A673 (cell line): ENCODE measurements at regions of chr1 and their contacts with region 1.

Region 1: GRCh38 chr1:165367375-165367993 is 11.0 kb upstream of the LMX1A start:
- DNase-seq: peak; percentile 76
- H3K4me3 ChIP-seq: no peak overlapping the region
- H3K27ac ChIP-seq: no peak overlapping the region
- H3K4me1 ChIP-seq: no peaks in the 10 kb centered on the region
- H3K27me3 ChIP-seq: no peaks in the 10 kb centered on the region
- CTCF ChIP-seq: peak; percentile 96

Region 2: DNA sequence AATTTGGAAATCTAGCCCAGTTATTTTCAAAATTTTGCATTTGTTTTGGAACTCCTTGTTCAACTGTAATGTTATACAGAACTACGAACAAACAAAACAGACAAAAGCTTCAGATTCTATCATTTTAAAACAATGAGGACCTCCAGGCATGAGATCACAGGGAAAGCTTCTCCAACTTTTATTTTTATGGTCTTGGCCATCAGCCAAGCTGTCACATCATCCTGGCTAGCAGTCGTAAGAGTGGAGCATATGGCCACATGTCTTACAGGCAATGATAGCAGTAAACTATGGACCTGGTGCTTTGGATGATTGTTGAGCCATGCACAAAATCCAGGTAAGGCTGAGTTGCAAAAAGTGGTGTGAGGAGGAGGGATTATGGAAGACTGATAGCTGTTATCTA is 310.6 kb before region 1 on chr1:
- CTCF ChIA-PET with region 1: no interaction called
- POLR2A ChIA-PET with region 1: no interaction called
- intact Hi-C with region 1: no loop called
- DNase-seq: peak; percentile 32
- H3K4me3 ChIP-seq: no peak overlapping the region
- H3K27ac ChIP-seq: no peak overlapping the region
- H3K4me1 ChIP-seq: no peaks in the 10 kb centered on the region
- H3K27me3 ChIP-seq: no peaks in the 10 kb centered on the region
- CTCF ChIP-seq: no peak

Region 3: GRCh38 chr1:165129568-165130164 is 237.8 kb before region 1 on chr1:
- CTCF ChIA-PET with region 1: interaction called, 7 read pairs
- POLR2A ChIA-PET with region 1: no interaction called
- intact Hi-C with region 1: loop called (anchors 5 kb)
- DNase-seq: peak; percentile 81
- H3K4me3 ChIP-seq: no peak overlapping the region
- H3K27ac ChIP-seq: no peak overlapping the region
- H3K4me1 ChIP-seq: no peaks in the 10 kb centered on the region
- H3K27me3 ChIP-seq: peaks cover 59% of the 10 kb centered on the region
- CTCF ChIP-seq: peak; percentile 91

Region 4: DNA sequence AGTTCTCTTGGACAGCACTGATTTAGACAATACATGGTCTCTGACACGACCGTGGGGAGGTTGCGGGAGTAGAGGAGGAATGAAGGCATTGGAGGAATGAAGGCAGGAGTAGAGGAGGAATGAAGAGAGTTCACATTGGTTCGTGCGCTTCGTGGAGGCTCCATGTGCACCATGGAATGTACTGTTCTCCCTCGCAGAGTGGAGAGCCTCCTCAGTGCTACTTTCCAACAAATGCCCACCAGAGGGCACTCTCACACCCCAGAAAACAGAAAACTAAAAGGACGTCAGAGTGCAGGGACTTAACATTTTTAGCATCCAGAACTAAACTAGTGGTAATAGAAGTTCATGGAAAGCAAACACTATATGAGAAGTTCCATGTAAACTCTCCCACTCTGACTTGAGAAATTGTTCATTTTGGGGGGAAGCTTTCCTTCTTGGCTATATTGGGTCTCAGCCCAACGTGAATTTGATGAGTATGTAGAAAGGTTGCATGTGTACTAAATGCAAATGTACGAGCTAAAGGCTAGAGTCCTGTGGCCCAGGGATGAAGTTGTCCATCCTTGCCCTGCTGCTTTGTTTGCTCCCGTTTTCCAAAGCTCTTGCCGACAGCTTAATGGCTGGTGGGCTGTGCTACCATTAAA is 222.6 kb before region 1 on chr1:
- CTCF ChIA-PET with region 1: no interaction called
- POLR2A ChIA-PET with region 1: no interaction called
- intact Hi-C with region 1: loop called (anchors 1 kb)
- DNase-seq: peak; percentile 82
- H3K4me3 ChIP-seq: no peak overlapping the region
- H3K27ac ChIP-seq: no peak overlapping the region
- H3K4me1 ChIP-seq: no peaks in the 10 kb centered on the region
- H3K27me3 ChIP-seq: peaks cover 26% of the 10 kb centered on the region
- CTCF ChIP-seq: peak; percentile 90

Region 5: GRCh38 chr1:165257969-165258459 is 109.5 kb before region 1 on chr1:
- CTCF ChIA-PET with region 1: interaction called, 23 read pairs
- POLR2A ChIA-PET with region 1: no interaction called
- intact Hi-C with region 1: loop called (anchors 1 kb)
- DNase-seq: peak; percentile 86
- H3K4me3 ChIP-seq: no peak overlapping the region
- H3K27ac ChIP-seq: no peak overlapping the region
- H3K4me1 ChIP-seq: no peaks in the 10 kb centered on the region
- H3K27me3 ChIP-seq: peaks cover 1% of the 10 kb centered on the region
- CTCF ChIP-seq: peak; percentile 93